ENCODE measurements at regions of chr16 and their contacts with region 1.

Region 1: DNA sequence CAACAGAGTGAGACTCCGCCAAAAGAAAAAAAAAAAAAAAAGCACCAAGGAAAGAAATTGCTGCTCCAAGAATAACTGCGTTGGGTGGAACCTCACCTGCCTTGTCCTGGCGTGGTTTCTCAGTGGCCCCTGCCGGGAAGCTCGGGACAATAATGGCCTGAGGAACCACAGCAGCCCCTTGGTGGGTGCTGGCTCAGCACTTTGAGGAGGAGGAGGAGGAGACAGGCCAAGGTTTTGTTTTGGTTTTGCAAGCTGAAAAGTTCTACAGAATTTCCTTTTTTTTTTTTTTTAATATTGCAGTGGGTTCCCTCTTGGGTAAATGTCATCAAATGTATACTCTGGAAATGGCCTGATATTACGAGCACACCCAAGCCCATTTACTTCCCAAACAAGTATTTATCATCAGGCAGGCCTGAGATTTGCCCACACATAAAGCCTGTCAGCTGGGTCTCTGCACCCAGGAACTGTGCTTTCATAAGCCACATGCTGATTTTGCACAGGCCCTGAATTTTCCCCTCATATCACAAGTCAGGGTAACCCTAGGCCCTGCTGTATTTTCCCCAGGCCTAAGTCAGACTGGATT is 78.3 kb downstream of the SOCS1 start:
- DNase-seq: no peak

Region 2: DNA sequence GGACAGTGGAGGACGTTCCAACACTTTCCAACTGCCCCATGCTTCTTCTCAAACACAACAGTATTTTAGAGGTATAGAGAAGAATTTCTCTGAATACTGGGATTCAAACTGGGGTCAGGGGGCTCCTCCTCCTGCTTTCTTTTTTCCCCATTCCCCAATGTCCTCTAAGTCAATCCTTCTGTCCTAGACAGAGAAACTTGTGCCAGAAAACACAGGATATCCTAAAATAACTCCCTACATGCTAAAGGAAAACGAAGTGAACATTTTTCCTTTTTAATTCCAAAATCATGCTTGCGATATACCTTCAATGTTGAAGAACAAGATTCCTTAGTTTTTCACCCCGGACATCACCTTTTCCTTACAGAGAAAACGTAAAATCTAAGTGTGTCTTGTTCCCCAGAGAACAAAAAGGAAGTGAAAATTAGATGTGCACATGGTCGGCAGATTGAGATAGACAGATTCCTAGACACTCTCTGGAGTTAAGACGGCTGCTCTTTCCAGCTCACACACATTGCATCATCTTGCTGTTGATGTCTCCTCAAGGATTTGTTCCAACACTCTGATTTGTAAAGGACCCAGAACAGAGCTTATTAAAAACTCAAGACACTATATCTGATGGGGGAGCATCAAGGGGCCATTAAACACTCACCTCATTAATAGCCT is 1223.6 kb before region 1 on chr16:
- intact Hi-C with region 1: no loop called
- DNase-seq: no peak

Region 3: GRCh38 chr16:11194913-11195312 is 17.2 kb after region 1 on chr16:
- intact Hi-C with region 1: loop called in 1 of 2 experiments (anchors 1 kb)
- DNase-seq: no peak

Region 4: DNA sequence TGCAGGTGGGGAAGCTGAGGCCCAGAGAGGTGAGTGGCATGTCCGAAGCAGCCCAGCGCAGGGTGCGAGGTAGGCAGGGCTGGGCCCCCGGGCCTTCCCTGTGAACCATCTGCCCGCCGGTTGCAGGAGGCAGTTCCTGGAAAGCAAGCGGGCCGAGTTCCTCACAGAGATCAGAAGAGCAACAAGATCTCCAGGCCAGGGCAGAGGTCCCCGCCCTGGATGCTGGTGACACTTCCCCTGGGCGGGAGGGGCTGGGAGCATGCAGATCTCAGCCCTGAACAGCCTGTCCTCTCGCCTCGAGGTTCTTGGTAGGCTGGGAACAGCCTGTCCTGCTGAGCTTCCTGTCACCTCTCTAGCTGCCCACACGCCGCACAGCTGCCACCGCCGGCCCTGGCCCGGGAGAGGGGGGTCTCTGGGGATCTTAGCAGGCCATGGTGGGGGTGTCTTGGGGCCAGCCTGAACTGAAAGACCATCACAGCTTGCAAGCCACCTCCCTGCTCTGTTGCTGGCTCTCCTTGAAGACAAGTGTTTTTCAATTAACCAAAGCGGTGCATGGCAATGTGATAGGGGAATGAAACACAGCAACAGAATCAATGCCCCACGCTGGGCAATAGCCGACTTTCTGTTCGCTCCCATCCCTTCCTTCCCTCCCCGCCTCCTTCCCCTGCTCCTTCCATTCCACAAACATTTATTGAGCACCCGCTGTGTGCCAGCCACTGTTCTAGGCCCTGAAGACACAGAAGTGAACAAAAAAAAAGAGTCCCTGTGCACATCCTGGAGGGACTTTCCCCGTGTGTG is 46.6 kb after region 1 on chr16:
- intact Hi-C with region 1: no loop called
- DNase-seq: peak; percentile 93